Activated CD8-positive, alpha-beta memory T cell treated with anti-CD3 and anti-CD28 coated beads, Interleukin-2, amount 10 ng/mL, durations not matched to agents 7 days and 5 days (primary cell): ENCODE measurements at regions of chr5 and their contacts with region 1.

Region 1: GRCh38 chr5:139368613-139369012 is 14.5 kb downstream of the SLC23A1 start:
- DNase-seq: no peak
- ATAC-seq: no peak
- H3K4me3 Mint-ChIP-seq: no peak overlapping the region
- H3K27ac Mint-ChIP-seq: no peak overlapping the region
- H3K4me1 Mint-ChIP-seq: peaks cover 31% of the 10 kb centered on the region
- H3K27me3 Mint-ChIP-seq: no peaks in the 10 kb centered on the region

Region 2: GRCh38 chr5:137501846-137502406 is 1866.7 kb before region 1 on chr5:
- CTCF ChIA-PET with region 1: no interaction called
- DNase-seq: no peak
- ATAC-seq: no peak
- H3K4me3 Mint-ChIP-seq: no peak overlapping the region
- H3K27ac Mint-ChIP-seq: no peak overlapping the region
- H3K4me1 Mint-ChIP-seq: no peaks in the 10 kb centered on the region
- H3K27me3 Mint-ChIP-seq: peaks cover 13% of the 10 kb centered on the region

Region 3: GRCh38 chr5:139385061-139386049 is 16.7 kb after region 1 on chr5:
- CTCF ChIA-PET with region 1: interaction called, 14 read pairs
- DNase-seq: peak; percentile 60
- ATAC-seq: peak; percentile 32
- H3K4me3 Mint-ChIP-seq: peak overlapping the region; percentile 73
- H3K27ac Mint-ChIP-seq: peak overlapping the region; percentile 97
- H3K4me1 Mint-ChIP-seq: peaks cover 69% of the 10 kb centered on the region
- H3K27me3 Mint-ChIP-seq: no peaks in the 10 kb centered on the region